BJ (cell line): ENCODE measurements at regions of chr17 and their contacts with region 1.

Region 1: GRCh38 chr17:51056813-51057510 is 63.7 kb downstream of the SPAG9 start:
- DNase-seq: peak; percentile 87
- H3K4me3 ChIP-seq: no peak overlapping the region
- H3K27me3 ChIP-seq: no peaks in the 10 kb centered on the region
- CTCF ChIP-seq: peak; percentile 65

Region 2: GRCh38 chr17:50949989-50950881 is 106.7 kb before region 1 on chr17:
- CTCF ChIA-PET with region 1: no interaction called
- POLR2A ChIA-PET with region 1: no interaction called
- DNase-seq: peak; percentile 71
- H3K4me3 ChIP-seq: no peak overlapping the region
- H3K27me3 ChIP-seq: no peaks in the 10 kb centered on the region
- CTCF ChIP-seq: peak; percentile 73

Region 3: DNA sequence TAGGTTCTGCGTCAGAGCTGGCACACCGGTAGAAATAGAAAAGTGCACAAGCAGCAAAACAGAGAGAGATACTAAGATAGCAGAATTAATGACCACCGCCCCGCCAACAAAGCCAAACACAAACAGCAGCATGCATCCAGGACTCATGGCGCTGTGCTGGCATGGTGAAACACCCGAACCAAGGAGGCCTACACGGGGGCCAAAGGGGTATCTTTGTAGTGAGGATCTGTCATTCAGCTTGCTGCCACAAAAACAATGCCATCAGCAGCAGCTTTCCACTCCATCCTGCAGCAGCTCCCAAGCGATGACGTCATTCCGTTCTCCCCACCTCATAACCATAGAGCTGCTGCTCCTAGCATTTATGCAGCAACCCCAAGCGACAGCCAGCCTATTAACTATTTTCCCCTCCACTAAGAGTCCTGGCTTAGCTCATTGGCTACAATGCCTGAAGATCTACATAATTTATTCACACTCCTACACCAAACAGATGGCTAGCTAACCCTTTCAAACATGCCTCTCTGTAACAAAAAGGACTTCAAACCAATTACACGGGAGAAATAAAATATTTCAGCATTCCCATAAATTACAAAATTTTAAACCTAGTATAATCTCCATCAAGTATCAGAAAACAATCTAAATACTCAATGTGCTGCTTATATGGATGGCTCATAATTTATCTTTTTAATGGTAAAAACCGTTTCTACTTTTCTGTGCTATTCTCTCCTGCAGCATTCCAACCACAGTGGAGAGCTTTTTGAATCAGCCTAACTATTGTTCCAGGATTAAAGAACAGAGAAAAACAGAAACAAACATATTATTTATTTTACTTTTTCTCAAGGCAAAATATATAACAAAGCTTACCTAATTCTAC is 10.2 kb before region 1 on chr17:
- CTCF ChIA-PET with region 1: interaction called, 39 read pairs
- POLR2A ChIA-PET with region 1: interaction called, 4 read pairs
- DNase-seq: no peak
- H3K4me3 ChIP-seq: peak overlapping the region; percentile 1; the same call in 1 of the 2 replicates
- H3K27me3 ChIP-seq: no peaks in the 10 kb centered on the region
- CTCF ChIP-seq: no peak

Region 4: DNA sequence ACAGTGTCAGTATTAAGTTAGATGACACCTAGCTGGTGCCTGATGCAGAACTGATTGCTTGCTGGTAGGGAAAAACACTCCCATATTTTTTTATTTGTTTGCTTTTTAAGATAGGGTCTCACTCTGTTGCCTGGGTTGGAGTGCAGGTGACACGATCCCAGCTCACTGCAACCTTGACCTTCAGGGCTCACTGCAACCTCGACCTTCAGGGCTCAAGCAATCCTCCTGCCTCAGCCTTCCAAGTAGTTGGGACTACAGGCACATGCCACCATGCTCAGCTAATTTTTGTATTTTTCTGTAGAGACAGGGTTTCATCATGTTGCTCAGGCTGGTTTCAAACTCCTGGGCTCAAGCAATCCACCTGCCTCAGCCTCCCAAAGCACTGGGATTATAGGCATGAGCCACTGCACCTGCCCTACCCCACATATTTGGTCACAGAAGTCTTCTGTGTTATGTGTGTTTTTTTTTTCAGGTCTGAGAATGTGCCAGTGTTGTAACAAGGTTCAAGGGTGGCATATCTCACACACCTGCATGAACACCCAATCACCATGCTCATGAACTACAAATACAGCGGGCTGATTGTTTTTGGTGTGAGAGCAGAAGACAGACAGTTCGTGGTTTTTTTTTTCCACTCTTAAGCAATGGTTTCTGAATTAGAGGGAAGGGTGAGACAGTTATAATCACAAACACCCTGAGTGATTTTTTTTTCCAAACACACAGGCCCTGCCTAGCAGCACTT is 40.9 kb after region 1 on chr17:
- CTCF ChIA-PET with region 1: no interaction called
- POLR2A ChIA-PET with region 1: no interaction called
- DNase-seq: no peak
- H3K4me3 ChIP-seq: no peak overlapping the region
- H3K27me3 ChIP-seq: no peaks in the 10 kb centered on the region
- CTCF ChIP-seq: no peak